ENCODE measurements at regions of chr11 and their contacts with region 1.

Region 1: GRCh38 chr11:24588075-24588474 is 91.2 kb downstream of the LUZP2 start:
- DNase-seq: peak; percentile 70
- H3K4me3 ChIP-seq: no peak overlapping the region
- H3K27ac ChIP-seq: peak overlapping the region; percentile 32
- H3K4me1 ChIP-seq: peaks cover 21% of the 10 kb centered on the region
- H3K27me3 ChIP-seq: no peaks in the 10 kb centered on the region
- CTCF ChIP-seq: no peak
- POLR2A ChIP-seq: no peak

Region 2: GRCh38 chr11:24478718-24479117 is 109.4 kb before region 1 on chr11:
- CTCF ChIA-PET with region 1: no interaction called
- POLR2A ChIA-PET with region 1: no interaction called
- dilution Hi-C with region 1: no loop called
- intact Hi-C with region 1: no loop called
- DNase-seq: no peak
- H3K4me3 ChIP-seq: no peak overlapping the region
- H3K27ac ChIP-seq: no peak overlapping the region
- H3K4me1 ChIP-seq: no peaks in the 10 kb centered on the region
- H3K27me3 ChIP-seq: peaks cover 0 to 2% of the 10 kb centered on the region in 2 experiments
- CTCF ChIP-seq: no peak
- POLR2A ChIP-seq: no peak

Region 3: DNA sequence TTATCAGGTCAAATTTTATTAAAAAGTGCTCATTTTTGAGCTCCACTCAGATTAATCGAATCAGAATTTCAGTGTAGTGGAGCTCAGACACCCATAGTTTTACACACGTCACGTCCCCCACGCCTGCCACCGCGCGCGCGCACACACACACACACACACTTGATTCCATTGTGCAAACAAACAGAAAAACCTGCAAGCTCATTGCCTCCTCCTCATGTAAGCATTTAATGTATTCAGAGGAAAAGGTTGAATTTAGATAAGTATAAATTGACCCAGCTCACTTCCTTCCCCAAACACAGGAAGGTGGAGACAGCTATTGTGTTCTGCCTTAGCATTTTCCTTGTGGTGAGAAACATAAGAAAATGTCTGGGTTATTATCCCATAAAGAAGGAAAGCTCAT is 245.5 kb after region 1 on chr11:
- CTCF ChIA-PET with region 1: no interaction called
- POLR2A ChIA-PET with region 1: no interaction called
- dilution Hi-C with region 1: no loop called
- intact Hi-C with region 1: loop called (anchors 10 kb)
- DNase-seq: peak; percentile 73
- H3K4me3 ChIP-seq: no peak overlapping the region
- H3K27ac ChIP-seq: peak overlapping the region; percentile 34
- H3K4me1 ChIP-seq: peaks cover 26% of the 10 kb centered on the region
- H3K27me3 ChIP-seq: no peaks in the 10 kb centered on the region
- CTCF ChIP-seq: no peak
- POLR2A ChIP-seq: no peak

Measured in endothelial cell of umbilical vein (primary cell).